ENCODE measurements at regions of chr19 and their contacts with region 1.

Region 1: DNA sequence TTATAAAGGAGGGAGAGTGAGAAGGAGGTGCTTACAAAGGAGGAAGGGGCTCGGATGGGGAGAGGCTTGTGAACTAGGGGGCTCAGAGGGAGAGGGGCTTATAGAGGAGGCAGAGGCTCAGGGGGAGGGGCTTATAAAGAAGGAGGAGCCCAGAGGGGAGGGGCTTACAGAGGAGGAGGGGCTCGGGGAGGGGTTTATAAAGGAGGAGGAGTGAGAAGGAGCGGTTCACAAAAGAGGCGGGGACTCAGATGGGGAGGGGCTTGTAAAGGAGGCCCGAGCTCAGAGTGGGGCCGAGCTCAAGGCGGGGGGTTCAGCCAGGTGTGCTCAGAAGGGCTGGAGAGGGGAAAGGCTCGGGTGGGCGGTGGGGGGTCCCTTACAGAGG is 500 bp downstream of the SMIM24 start:
- DNase-seq: no peak
- H3K4me3 Mint-ChIP-seq: no peak overlapping the region
- H3K27ac Mint-ChIP-seq: no peak overlapping the region
- H3K4me1 Mint-ChIP-seq: peaks cover under 1% of the 10 kb centered on the region
- H3K27me3 Mint-ChIP-seq: no peaks in the 10 kb centered on the region
- CTCF ChIP-seq: no peak

Region 2: GRCh38 chr19:3304871-3305423 is 174.9 kb before region 1 on chr19:
- CTCF ChIA-PET with region 1: interaction called, 76 read pairs
- POLR2A ChIA-PET with region 1: interaction called, 7 read pairs
- intact Hi-C with region 1: no loop called
- DNase-seq: peak; percentile 84
- H3K4me3 Mint-ChIP-seq: no peak overlapping the region
- H3K27ac Mint-ChIP-seq: no peak overlapping the region
- H3K4me1 Mint-ChIP-seq: peaks cover 3% of the 10 kb centered on the region
- H3K27me3 Mint-ChIP-seq: peaks cover 16% of the 10 kb centered on the region
- CTCF ChIP-seq: peak; percentile 95

Region 3: DNA sequence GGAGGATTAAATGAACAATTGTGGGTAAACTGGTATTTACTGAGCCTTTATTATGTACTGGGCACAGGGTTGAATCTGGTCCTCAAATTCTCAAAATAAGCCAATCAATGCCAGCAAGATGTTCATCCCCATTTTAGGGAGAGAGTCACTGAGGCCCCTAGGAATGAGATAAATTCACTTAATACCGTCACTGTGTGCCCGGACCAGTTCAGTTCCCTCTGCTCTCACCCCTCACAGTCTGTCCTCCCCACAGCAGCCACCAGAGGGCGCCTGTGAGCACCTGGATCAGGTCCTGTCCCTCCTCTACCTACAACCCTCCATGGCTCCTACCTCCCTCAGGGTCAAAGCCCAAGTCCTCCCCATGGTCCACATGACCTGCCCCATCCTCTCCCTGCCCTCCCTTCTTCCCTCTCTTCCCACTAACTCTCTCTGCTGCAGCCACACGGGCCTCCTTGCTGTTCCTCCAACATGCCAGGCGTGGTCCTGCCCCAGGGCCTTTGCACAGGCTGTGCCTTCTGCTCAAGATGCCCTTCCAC is 155.4 kb before region 1 on chr19:
- CTCF ChIA-PET with region 1: interaction called, 4 read pairs
- POLR2A ChIA-PET with region 1: interaction called, 3 read pairs
- intact Hi-C with region 1: loop called (anchors 1 kb)
- DNase-seq: peak; percentile 62
- H3K4me3 Mint-ChIP-seq: no peak overlapping the region
- H3K27ac Mint-ChIP-seq: no peak overlapping the region
- H3K4me1 Mint-ChIP-seq: no peaks in the 10 kb centered on the region
- H3K27me3 Mint-ChIP-seq: peaks cover 39% of the 10 kb centered on the region
- CTCF ChIP-seq: peak; percentile 75

Region 4: DNA sequence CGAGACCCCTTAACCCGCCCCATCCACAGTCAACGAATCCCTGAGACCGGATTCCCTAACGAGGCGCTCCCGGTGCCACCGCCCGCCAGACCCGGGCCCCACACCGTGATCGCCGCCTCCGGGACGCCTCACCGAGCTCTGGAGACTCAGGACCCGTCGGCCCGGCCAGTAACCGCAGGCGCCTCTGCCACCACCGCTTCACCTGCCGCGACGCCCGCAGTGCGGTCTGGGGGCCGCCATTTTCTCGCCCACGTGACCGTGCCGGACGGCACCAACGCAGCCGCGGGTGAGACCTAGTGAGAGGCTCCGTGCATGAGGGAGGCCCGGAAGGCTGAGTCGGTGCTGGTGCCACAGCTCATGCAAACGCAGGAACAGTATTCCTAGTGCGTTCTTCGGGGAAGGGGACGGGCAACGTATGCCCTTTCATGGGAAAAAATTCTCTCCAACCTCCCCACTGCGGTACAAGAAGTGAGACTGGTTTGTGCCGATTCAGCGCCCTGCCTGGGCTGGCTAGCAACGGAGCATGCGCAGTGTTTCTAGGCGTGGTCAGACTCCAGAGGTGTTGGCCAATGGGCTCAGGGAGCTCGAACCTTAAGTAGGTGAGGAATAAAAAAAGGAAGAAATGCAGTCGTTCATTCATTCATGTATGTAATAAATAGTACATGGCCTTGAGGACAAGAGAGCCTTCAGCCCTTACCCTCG is 20.8 kb after region 1 on chr19 and contains the start of gene DOHH:
- CTCF ChIA-PET with region 1: interaction called, 4 read pairs
- POLR2A ChIA-PET with region 1: interaction called, 10 read pairs
- intact Hi-C with region 1: no loop called
- DNase-seq: peak; percentile 97
- H3K4me3 Mint-ChIP-seq: peak within 1 kb of the TSS; percentile 97
- H3K27ac Mint-ChIP-seq: peak within 1 kb of the TSS; percentile 99
- H3K4me1 Mint-ChIP-seq: peaks cover 17% of the 10 kb centered on the region
- H3K27me3 Mint-ChIP-seq: no peaks in the 10 kb centered on the region
- CTCF ChIP-seq: no peak
- total RNA-seq, gene DOHH: 14.9 and 16.3 TPM in 2 replicates